ENCODE measurements at regions of chr17 and their contacts with region 1.

Region 1: GRCh38 chr17:40499551-40500174 is 1.8 kb downstream of the TNS4 start:
- DNase-seq: peak; percentile 60
- ATAC-seq: peak; percentile 97
- H3K4me3 ChIP-seq: no peak overlapping the region
- H3K27ac ChIP-seq: peak overlapping the region; percentile 71
- H3K4me1 ChIP-seq: peaks cover 19% of the 10 kb centered on the region
- H3K27me3 ChIP-seq: no peaks in the 10 kb centered on the region
- CTCF ChIP-seq: no peak
- POLR2A ChIP-seq: no peak
- RAD21 ChIP-seq: no peak; the same call in 1 of the 2 replicates

Region 2: GRCh38 chr17:40475234-40475908 is 24.3 kb before region 1 on chr17:
- CTCF ChIA-PET with region 1: interaction called, 10 read pairs
- POLR2A ChIA-PET with region 1: interaction called, 3 read pairs
- dilution Hi-C with region 1: no loop called
- in situ Hi-C with region 1: no loop called
- intact Hi-C with region 1: no loop called
- DNase-seq: no peak
- ATAC-seq: no peak
- H3K4me3 ChIP-seq: no peak overlapping the region
- H3K27ac ChIP-seq: peak overlapping the region; percentile 40
- H3K4me1 ChIP-seq: peaks cover 25% of the 10 kb centered on the region
- H3K27me3 ChIP-seq: no peaks in the 10 kb centered on the region
- CTCF ChIP-seq: no peak
- POLR2A ChIP-seq: no peak
- RAD21 ChIP-seq: no peak